ENCODE measurements at regions of chr18 and their contacts with region 1.

Region 1: GRCh38 chr18:70931942-70932814 is 643.3 kb downstream of the SOCS6 start:
- DNase-seq: peak in 5 of 9 donors; percentile 4 to 32 (median 19)
- ATAC-seq: no peak
- H3K4me3 ChIP-seq: no peak overlapping the region
- H3K4me3 Mint-ChIP-seq: no peak overlapping the region
- H3K27ac ChIP-seq: no peak overlapping the region
- H3K27ac Mint-ChIP-seq: peak overlapping the region in 3 of 9 donors; percentile 4 to 59 (median 16)
- H3K4me1 ChIP-seq: peaks cover 0 to 6% of the 10 kb centered on the region in 2 donors
- H3K4me1 Mint-ChIP-seq: peaks cover 0 to 10% (median 8%) of the 10 kb centered on the region in 7 donors
- H3K27me3 ChIP-seq: no peaks in the 10 kb centered on the region
- H3K27me3 Mint-ChIP-seq: no peaks in the 10 kb centered on the region

Region 2: DNA sequence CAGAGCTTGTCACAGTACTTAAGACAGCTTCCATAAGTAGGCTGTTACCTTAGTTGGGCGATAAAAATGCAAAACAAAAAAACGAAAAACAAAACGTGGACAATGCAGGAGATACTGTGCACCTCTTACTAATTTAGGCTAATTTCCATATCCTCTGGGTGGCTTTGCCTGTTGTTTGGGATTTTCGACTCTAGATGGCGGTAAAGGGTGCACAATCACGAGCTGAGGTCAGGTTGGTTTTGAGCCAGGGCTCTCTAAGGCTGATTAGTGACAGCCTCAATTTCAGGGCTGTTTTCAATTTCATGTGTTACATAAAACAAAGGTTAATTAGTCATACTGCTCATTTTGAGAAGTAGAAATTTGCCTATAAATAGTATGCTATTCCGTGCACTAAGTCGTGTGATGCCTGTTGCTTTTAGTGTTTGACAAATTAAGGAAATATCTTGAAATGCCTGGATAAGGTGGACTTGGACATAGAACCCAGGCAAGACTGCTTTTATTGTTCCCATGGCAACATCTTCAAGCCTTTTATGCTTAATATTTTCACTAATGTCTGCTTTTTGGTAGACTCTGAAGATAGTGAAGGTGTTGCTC is 150.2 kb before region 1 on chr18:
- CTCF ChIA-PET with region 1: no interaction called
- POLR2A ChIA-PET with region 1: no interaction called
- intact Hi-C with region 1: loop called in 1 of 2 experiments (anchors 2 kb)
- DNase-seq: peak; percentile 21 to 76 (median 72)
- ATAC-seq: peak; percentile 96
- H3K4me3 ChIP-seq: no peak overlapping the region
- H3K4me3 Mint-ChIP-seq: peak overlapping the region in 5 of 10 donors; percentile 2 to 60 (median 10)
- H3K27ac ChIP-seq: no peak overlapping the region
- H3K27ac Mint-ChIP-seq: peak overlapping the region in 3 of 9 donors; percentile 22 to 80 (median 77)
- H3K4me1 ChIP-seq: peaks cover 0 to 6% of the 10 kb centered on the region in 2 donors
- H3K4me1 Mint-ChIP-seq: peaks cover 0 to 24% (median 23%) of the 10 kb centered on the region in 7 donors
- H3K27me3 ChIP-seq: no peaks in the 10 kb centered on the region
- H3K27me3 Mint-ChIP-seq: no peaks in the 10 kb centered on the region

Region 3: DNA sequence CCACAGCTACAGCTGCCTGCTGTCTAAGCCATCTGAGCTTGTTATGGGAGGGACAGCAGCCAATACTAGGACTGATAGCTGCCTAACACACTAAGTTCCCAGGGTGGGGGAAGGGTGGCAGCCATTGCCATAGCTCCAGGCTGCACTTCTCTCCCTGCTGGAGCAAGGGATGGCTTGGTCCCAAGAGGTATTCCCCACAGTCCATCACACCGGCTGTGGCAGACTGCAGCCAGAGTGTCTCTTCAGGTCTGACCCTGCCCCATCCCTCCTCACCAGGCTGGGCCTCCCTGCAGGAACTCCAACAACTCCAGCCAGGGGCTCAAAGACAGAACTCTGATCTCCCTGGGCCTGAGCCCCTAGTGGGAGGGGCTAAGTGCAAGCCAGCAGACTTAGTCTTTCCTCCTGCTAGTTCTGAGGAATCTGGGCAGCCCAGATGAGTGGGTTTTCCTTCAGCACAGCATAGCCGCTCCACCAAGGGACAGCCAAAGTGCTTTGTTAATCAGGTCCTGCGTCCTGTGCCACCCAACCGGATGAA is 11.3 kb before region 1 on chr18:
- CTCF ChIA-PET with region 1: interaction called, 3 read pairs
- POLR2A ChIA-PET with region 1: no interaction called
- intact Hi-C with region 1: loop called in 1 of 2 experiments (anchors 2 kb)
- DNase-seq: no peak
- ATAC-seq: no peak
- H3K4me3 ChIP-seq: no peak overlapping the region
- H3K4me3 Mint-ChIP-seq: no peak overlapping the region
- H3K27ac ChIP-seq: no peak overlapping the region
- H3K27ac Mint-ChIP-seq: no peak overlapping the region
- H3K4me1 ChIP-seq: no peaks in the 10 kb centered on the region
- H3K4me1 Mint-ChIP-seq: no peaks in the 10 kb centered on the region
- H3K27me3 ChIP-seq: no peaks in the 10 kb centered on the region
- H3K27me3 Mint-ChIP-seq: no peaks in the 10 kb centered on the region

Region 4: DNA sequence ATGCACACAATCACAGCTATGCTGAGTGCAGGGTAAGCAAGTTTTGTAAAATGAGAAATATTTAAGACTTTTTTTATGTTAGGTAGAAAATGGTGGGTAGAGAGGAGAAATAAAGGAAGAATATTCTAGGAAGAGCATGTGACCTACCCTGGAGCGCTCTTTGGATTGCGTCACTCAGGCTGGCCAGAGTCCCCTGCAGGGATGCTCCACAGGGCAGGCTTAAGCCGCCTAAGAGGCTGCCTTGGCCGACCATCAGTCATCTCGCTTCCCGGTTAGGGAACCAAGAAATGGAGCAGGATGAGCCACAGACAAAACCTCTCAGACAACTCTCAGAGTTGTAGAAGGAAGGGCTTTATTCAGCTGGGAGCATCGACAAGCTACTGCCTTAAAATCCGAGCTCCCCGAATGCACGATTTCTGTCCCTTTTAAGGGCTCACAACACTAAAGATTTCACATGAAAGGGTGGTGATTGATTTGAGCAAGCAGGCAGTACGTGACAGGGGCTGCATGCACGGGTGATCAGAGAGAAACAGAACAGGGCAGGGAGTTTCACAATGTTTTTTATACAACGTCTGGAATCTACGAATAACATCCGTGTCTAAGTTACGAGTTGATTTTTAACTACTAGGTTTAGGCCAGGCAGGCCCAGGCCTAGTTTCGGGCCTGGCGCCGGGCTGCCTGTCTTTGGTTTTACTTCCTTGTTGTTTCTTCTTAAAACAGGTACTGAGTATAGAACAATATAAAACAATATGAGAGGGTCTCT is 540.0 kb after region 1 on chr18:
- CTCF ChIA-PET with region 1: no interaction called
- POLR2A ChIA-PET with region 1: no interaction called
- intact Hi-C with region 1: loop called in 1 of 2 experiments (anchors 10 kb)
- DNase-seq: no peak
- ATAC-seq: no peak
- H3K4me3 ChIP-seq: no peak overlapping the region
- H3K4me3 Mint-ChIP-seq: no peak overlapping the region
- H3K27ac ChIP-seq: no peak overlapping the region
- H3K27ac Mint-ChIP-seq: no peak overlapping the region
- H3K4me1 ChIP-seq: no peaks in the 10 kb centered on the region
- H3K4me1 Mint-ChIP-seq: no peaks in the 10 kb centered on the region
- H3K27me3 ChIP-seq: no peaks in the 10 kb centered on the region
- H3K27me3 Mint-ChIP-seq: no peaks in the 10 kb centered on the region

Region 5: GRCh38 chr18:71784777-71785176 is 852.6 kb after region 1 on chr18:
- CTCF ChIA-PET with region 1: no interaction called
- POLR2A ChIA-PET with region 1: no interaction called
- intact Hi-C with region 1: loop called (anchors 10 kb)
- DNase-seq: peak in 3 of 9 donors; percentile 0 to 5 (median 0)
- ATAC-seq: no peak
- H3K4me3 ChIP-seq: no peak overlapping the region
- H3K4me3 Mint-ChIP-seq: no peak overlapping the region
- H3K27ac ChIP-seq: no peak overlapping the region
- H3K27ac Mint-ChIP-seq: no peak overlapping the region
- H3K4me1 ChIP-seq: no peaks in the 10 kb centered on the region
- H3K4me1 Mint-ChIP-seq: no peaks in the 10 kb centered on the region
- H3K27me3 ChIP-seq: no peaks in the 10 kb centered on the region
- H3K27me3 Mint-ChIP-seq: no peaks in the 10 kb centered on the region

Region 6: GRCh38 chr18:72086421-72086820 is 1154.2 kb after region 1 on chr18:
- CTCF ChIA-PET with region 1: no interaction called
- POLR2A ChIA-PET with region 1: no interaction called
- intact Hi-C with region 1: loop called in 1 of 2 experiments (anchors 2 kb)
- DNase-seq: peak in 4 of 9 donors; percentile 5 to 22 (median 7)
- ATAC-seq: no peak
- H3K4me3 ChIP-seq: no peak overlapping the region
- H3K4me3 Mint-ChIP-seq: no peak overlapping the region
- H3K27ac ChIP-seq: no peak overlapping the region
- H3K27ac Mint-ChIP-seq: no peak overlapping the region
- H3K4me1 ChIP-seq: no peaks in the 10 kb centered on the region
- H3K4me1 Mint-ChIP-seq: peaks cover 0 to 4% (median 0%) of the 10 kb centered on the region in 7 donors
- H3K27me3 ChIP-seq: no peaks in the 10 kb centered on the region
- H3K27me3 Mint-ChIP-seq: peaks cover 0 to 5% (median 0%) of the 10 kb centered on the region in 5 donors

Region 7: DNA sequence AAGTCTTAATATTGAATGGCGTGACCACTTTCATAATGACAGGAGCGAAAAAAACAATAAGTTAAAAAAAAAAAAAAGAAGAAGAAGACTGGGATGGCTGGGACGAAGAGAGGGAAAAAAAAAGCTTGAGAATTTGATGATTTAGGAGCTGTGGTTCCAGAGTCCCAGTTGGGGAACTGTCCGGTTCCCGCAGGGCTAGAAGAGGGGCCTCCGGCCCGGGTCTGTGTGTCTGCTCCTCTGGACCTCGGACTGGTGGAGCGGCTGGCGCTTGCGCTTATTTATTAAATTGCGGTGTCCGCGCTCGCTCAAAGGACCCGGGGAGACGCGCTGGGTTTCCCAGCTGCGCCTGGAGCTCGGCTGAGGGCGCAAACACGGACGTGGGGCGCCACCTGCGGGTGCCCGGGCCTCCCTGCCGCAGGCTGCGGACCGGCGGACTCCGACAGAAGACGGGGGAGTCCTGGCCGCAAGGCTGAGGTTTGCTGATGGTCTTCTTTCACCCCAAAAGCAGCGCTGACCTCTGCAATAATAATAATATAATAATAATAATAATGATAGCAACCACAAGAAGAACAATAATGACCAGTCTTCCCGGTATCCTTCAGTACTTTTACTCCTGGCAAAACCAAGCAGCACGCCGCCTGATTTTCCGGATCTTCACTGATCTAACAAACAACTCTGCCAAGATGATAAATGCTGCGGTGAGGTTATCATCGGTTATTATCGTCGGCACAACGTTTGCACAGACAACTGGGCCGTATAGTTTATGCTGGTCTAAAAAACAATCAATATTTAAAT is 1612.1 kb after region 1 on chr18 and contains the start of gene CBLN2:
- CTCF ChIA-PET with region 1: no interaction called
- POLR2A ChIA-PET with region 1: no interaction called
- intact Hi-C with region 1: loop called in 1 of 2 experiments (anchors 10 kb)
- DNase-seq: peak in 1 of 9 donors; percentile 52
- ATAC-seq: no peak
- H3K4me3 ChIP-seq: no peak within 1 kb of the TSS
- H3K4me3 Mint-ChIP-seq: peak within 1 kb of the TSS in 8 of 10 donors; percentile 6 to 75 (median 42)
- H3K27ac ChIP-seq: no peak within 1 kb of the TSS
- H3K27ac Mint-ChIP-seq: peak within 1 kb of the TSS in 1 of 9 donors; percentile 5
- H3K4me1 ChIP-seq: no peaks in the 10 kb centered on the region
- H3K4me1 Mint-ChIP-seq: peaks cover 5 to 18% (median 12%) of the 10 kb centered on the region in 7 donors
- H3K27me3 ChIP-seq: no peaks in the 10 kb centered on the region
- H3K27me3 Mint-ChIP-seq: peaks cover 39 to 51% (median 44%) of the 10 kb centered on the region in 5 donors
- total RNA-seq, gene CBLN2: not detected

Measured in naive thymus-derived CD4-positive, alpha-beta T cell (primary cell).